Endothelial cell of umbilical vein (primary cell): ENCODE measurements at regions of chr7 and their contacts with region 1.

Region 1: DNA sequence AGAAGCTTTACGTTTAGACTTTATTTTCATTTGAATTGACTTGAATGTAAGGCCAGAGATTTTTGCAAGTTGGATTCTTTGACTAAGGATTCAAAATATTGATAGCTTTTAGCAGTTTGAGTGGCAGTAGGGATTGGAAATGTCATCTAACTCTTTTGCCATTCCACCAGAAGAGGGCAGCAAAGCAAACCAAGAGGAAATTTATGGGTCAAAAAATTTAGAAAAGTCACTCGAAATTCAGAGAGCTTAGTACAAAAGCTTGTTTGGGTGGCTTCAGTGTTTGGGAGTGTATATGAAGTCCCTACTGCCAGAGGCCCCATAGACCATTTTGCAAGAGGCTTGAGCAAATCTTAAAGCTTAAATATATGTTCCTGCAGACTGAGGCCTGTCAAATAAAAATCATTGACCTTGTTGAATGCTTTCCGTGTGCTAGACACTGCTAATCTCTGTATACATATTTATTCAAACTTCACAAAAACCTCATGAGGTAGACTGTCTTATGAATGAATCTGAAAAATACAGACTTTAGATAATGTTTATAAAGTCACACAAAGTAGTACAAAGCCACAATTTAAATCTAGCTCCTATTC is 44.6 kb upstream of the RSBN1L start:
- DNase-seq: peak; percentile 54
- H3K4me3 ChIP-seq: no peak overlapping the region
- H3K27ac ChIP-seq: no peak overlapping the region
- H3K4me1 ChIP-seq: no peaks in the 10 kb centered on the region
- H3K27me3 ChIP-seq: no peaks in the 10 kb centered on the region
- CTCF ChIP-seq: peak; percentile 47 to 54
- POLR2A ChIP-seq: no peak

Region 2: DNA sequence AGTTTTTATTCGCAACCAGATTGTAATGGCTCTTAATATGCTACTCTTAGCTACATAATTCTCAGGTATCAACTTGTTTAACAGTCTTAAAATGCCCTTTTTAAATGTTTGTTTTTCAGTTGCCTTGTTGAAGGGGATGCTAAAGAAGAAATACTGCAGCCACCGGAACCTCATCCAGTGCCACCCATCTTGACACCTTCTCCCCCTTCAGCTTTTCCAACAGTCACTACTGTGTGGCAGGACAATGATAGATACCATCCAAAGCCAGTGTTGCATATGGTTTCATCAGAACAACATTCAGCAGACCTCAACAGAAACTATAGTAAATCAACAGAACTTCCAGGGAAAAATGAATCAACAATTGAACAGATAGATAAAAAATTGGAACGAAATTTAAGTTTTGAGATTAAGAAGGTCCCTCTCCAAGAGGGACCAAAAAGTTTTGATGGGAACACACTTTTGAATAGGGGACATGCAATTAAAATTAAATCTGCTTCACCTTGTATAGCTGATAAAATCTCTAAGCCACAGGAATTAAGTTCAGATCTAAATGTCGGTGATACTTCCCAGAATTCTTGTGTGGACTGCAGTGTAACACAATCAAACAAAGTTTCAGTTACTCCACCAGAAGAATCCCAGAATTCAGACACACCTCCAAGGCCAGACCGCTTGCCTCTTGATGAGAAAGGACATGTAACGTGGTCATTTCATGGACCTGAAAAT is 24.9 kb before region 1 on chr7:
- CTCF ChIA-PET with region 1: interaction called, 13 read pairs
- POLR2A ChIA-PET with region 1: interaction called, 7 read pairs
- dilution Hi-C with region 1: no loop called
- intact Hi-C with region 1: no loop called
- DNase-seq: no peak
- H3K4me3 ChIP-seq: no peak overlapping the region
- H3K27ac ChIP-seq: no peak overlapping the region
- H3K4me1 ChIP-seq: no peaks in the 10 kb centered on the region
- H3K27me3 ChIP-seq: no peaks in the 10 kb centered on the region
- CTCF ChIP-seq: no peak
- POLR2A ChIP-seq: no peak

Region 3: DNA sequence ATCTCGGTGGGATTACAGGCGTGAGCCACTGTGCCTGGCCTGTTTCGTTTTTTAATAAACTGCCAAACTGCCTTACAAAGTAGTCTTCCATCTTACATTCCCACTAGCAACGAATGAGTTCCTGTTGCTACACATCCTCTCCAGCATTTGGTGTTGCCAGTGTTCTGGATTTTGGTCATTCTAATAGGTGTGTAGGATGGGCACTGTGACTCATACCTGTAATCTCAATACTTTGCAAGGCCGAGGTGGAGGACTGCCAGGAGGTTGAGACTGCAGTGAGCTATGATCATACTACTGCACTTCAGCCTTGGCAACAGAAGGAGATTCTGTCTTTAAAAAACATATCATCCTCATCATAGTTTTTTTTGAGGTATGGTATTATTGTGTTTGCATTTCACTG is 23.2 kb after region 1 on chr7:
- CTCF ChIA-PET with region 1: interaction called, 15 read pairs
- POLR2A ChIA-PET with region 1: no interaction called
- dilution Hi-C with region 1: no loop called
- intact Hi-C with region 1: no loop called
- DNase-seq: no peak
- H3K4me3 ChIP-seq: no peak overlapping the region
- H3K27ac ChIP-seq: no peak overlapping the region
- H3K4me1 ChIP-seq: no peaks in the 10 kb centered on the region
- H3K27me3 ChIP-seq: no peaks in the 10 kb centered on the region
- CTCF ChIP-seq: no peak
- POLR2A ChIP-seq: no peak

Region 4: GRCh38 chr7:77752021-77752420 is 100.4 kb after region 1 on chr7:
- CTCF ChIA-PET with region 1: interaction called, 40 read pairs
- POLR2A ChIA-PET with region 1: no interaction called
- dilution Hi-C with region 1: no loop called
- intact Hi-C with region 1: no loop called
- DNase-seq: peak; percentile 76
- H3K4me3 ChIP-seq: no peak overlapping the region
- H3K27ac ChIP-seq: no peak overlapping the region
- H3K4me1 ChIP-seq: no peaks in the 10 kb centered on the region
- H3K27me3 ChIP-seq: no peaks in the 10 kb centered on the region
- CTCF ChIP-seq: no peak
- POLR2A ChIP-seq: no peak

Region 5: DNA sequence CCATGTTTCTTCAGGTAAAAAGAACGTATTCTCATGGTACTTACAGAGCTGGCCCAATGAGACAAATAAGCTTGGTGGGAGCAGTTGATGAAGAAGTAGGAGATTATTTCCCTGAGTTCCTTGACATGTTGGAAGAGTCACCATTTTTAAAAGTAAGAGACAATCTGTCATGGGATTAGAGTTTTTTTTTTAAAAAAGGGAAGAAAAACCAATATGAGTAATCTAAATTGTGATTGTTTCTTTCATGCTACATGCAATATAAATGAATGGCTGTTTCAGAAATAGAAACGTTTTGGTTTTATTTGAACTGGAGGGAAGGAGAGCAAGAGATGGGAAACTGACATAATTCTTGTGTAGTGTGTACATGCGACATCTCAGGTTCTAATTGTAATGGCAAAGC is 113.8 kb after region 1 on chr7:
- CTCF ChIA-PET with region 1: interaction called, 43 read pairs
- POLR2A ChIA-PET with region 1: no interaction called
- dilution Hi-C with region 1: no loop called
- intact Hi-C with region 1: no loop called
- DNase-seq: no peak
- H3K4me3 ChIP-seq: no peak overlapping the region
- H3K27ac ChIP-seq: no peak overlapping the region
- H3K4me1 ChIP-seq: no peaks in the 10 kb centered on the region
- H3K27me3 ChIP-seq: no peaks in the 10 kb centered on the region
- CTCF ChIP-seq: no peak
- POLR2A ChIP-seq: no peak